ENCODE measurements at regions of chr2 and their contacts with region 1.

Region 1: DNA sequence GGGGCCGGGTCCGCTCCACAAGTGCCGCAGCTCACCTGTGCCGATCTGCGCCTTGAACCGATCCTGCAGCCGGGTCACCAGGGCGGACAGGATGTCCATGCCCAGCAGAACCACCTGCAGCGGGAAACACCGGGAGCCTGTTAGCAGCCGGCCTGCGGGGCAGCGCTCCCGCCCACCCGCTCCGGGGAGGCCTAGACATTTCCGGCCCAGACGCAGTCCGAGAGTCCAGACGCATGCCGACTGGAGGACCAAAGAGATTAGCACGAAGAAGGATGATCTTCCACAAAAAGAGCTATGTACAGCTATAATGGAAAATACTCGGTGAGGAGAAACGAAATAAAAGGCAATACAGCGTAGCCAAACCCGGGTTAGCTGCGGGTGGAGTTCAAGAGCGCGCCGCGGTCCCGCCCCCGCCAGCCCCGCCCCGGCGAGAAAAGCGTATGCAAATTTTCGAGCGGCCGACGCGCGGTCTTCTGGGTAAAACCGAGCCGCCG is 421 bp upstream of the RNU4ATAC start:
- DNase-seq: no peak
- ATAC-seq: peak; percentile 72
- H3K4me3 ChIP-seq: peak overlapping the region; percentile 75 to 94 (median 85)
- H3K4me3 Mint-ChIP-seq: peak overlapping the region; percentile 92
- H3K27ac ChIP-seq: peak overlapping the region; percentile 100
- H3K27ac Mint-ChIP-seq: peak overlapping the region; percentile 97
- H3K4me1 ChIP-seq: peaks cover 8 to 13% of the 10 kb centered on the region in 2 donors
- H3K4me1 Mint-ChIP-seq: peaks cover 42% of the 10 kb centered on the region
- H3K27me3 ChIP-seq: no peaks in the 10 kb centered on the region
- H3K27me3 Mint-ChIP-seq: no peaks in the 10 kb centered on the region
- CTCF ChIP-seq: no peak

Region 2: GRCh38 chr2:121400201-121400600 is 130.1 kb before region 1 on chr2:
- CTCF ChIA-PET with region 1: interaction called, 7 read pairs
- POLR2A ChIA-PET with region 1: no interaction called
- intact Hi-C with region 1: loop called (anchors 1 kb)
- DNase-seq: no peak
- ATAC-seq: no peak
- H3K4me3 ChIP-seq: no peak overlapping the region
- H3K4me3 Mint-ChIP-seq: no peak overlapping the region
- H3K27ac ChIP-seq: no peak overlapping the region
- H3K27ac Mint-ChIP-seq: no peak overlapping the region
- H3K4me1 ChIP-seq: no peaks in the 10 kb centered on the region
- H3K4me1 Mint-ChIP-seq: no peaks in the 10 kb centered on the region
- H3K27me3 ChIP-seq: no peaks in the 10 kb centered on the region
- H3K27me3 Mint-ChIP-seq: no peaks in the 10 kb centered on the region
- CTCF ChIP-seq: no peak

Region 3: GRCh38 chr2:121505005-121505404 is 25.3 kb before region 1 on chr2:
- CTCF ChIA-PET with region 1: no interaction called
- POLR2A ChIA-PET with region 1: no interaction called
- intact Hi-C with region 1: no loop called
- DNase-seq: no peak
- ATAC-seq: no peak
- H3K4me3 ChIP-seq: no peak overlapping the region
- H3K4me3 Mint-ChIP-seq: no peak overlapping the region
- H3K27ac ChIP-seq: no peak overlapping the region
- H3K27ac Mint-ChIP-seq: no peak overlapping the region
- H3K4me1 ChIP-seq: no peaks in the 10 kb centered on the region
- H3K4me1 Mint-ChIP-seq: no peaks in the 10 kb centered on the region
- H3K27me3 ChIP-seq: no peaks in the 10 kb centered on the region
- H3K27me3 Mint-ChIP-seq: no peaks in the 10 kb centered on the region
- CTCF ChIP-seq: no peak

Region 4: GRCh38 chr2:121611730-121612705 is 81.8 kb after region 1 on chr2:
- CTCF ChIA-PET with region 1: no interaction called
- POLR2A ChIA-PET with region 1: no interaction called
- intact Hi-C with region 1: loop called (anchors 2 kb)
- DNase-seq: peak; percentile 80
- ATAC-seq: peak; percentile 41
- H3K4me3 ChIP-seq: peak overlapping the region in 1 of 5 experiments; percentile 37
- H3K4me3 Mint-ChIP-seq: no peak overlapping the region
- H3K27ac ChIP-seq: peak overlapping the region; percentile 51 to 72
- H3K27ac Mint-ChIP-seq: no peak overlapping the region
- H3K4me1 ChIP-seq: peaks cover 7 to 8% of the 10 kb centered on the region in 2 donors
- H3K4me1 Mint-ChIP-seq: peaks cover 17% of the 10 kb centered on the region
- H3K27me3 ChIP-seq: no peaks in the 10 kb centered on the region
- H3K27me3 Mint-ChIP-seq: no peaks in the 10 kb centered on the region
- CTCF ChIP-seq: no peak

Region 5: DNA sequence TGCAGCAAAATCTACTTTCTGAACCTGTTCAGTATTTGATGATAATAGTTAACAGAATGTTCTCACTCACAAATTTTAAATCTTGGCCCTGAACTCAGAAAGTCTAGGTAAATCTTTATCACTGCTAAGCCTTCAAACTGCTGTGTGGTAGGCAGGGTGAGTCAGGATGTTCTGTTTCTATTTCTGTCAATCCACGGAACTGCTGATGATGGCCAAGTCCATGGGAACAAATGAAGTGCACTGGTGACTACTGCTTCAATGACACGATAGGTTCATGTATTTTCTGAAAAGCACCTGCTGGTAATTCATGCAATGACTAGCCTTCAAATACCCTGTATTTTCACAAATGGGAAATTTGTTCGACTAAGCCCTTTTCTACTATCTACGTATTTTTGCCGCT is 192.2 kb after region 1 on chr2:
- CTCF ChIA-PET with region 1: interaction called, 46 read pairs
- POLR2A ChIA-PET with region 1: interaction called, 5 read pairs
- intact Hi-C with region 1: loop called (anchors 1 kb)
- DNase-seq: no peak
- ATAC-seq: no peak
- H3K4me3 ChIP-seq: no peak overlapping the region
- H3K4me3 Mint-ChIP-seq: no peak overlapping the region
- H3K27ac ChIP-seq: no peak overlapping the region
- H3K27ac Mint-ChIP-seq: no peak overlapping the region
- H3K4me1 ChIP-seq: peaks cover 0 to 6% of the 10 kb centered on the region in 2 donors
- H3K4me1 Mint-ChIP-seq: peaks cover 3% of the 10 kb centered on the region
- H3K27me3 ChIP-seq: no peaks in the 10 kb centered on the region
- H3K27me3 Mint-ChIP-seq: no peaks in the 10 kb centered on the region
- CTCF ChIP-seq: no peak

Region 6: GRCh38 chr2:121755236-121756111 is 225.2 kb after region 1 on chr2 and contains the start of gene TSN:
- CTCF ChIA-PET with region 1: interaction called, 4 read pairs
- POLR2A ChIA-PET with region 1: interaction called, 6 read pairs
- intact Hi-C with region 1: loop called (anchors 1 kb)
- DNase-seq: peak; percentile 99
- ATAC-seq: peak; percentile 99
- H3K4me3 ChIP-seq: peak within 1 kb of the TSS; percentile 70 to 99 (median 95)
- H3K4me3 Mint-ChIP-seq: peak within 1 kb of the TSS; percentile 90
- H3K27ac ChIP-seq: peak within 1 kb of the TSS; percentile 49 to 84
- H3K27ac Mint-ChIP-seq: peak within 1 kb of the TSS; percentile 96
- H3K4me1 ChIP-seq: peaks cover 14 to 19% of the 10 kb centered on the region in 2 donors
- H3K4me1 Mint-ChIP-seq: peaks cover 27% of the 10 kb centered on the region
- H3K27me3 ChIP-seq: no peaks in the 10 kb centered on the region
- H3K27me3 Mint-ChIP-seq: no peaks in the 10 kb centered on the region
- CTCF ChIP-seq: no peak
- total RNA-seq, gene TSN: 43.4 and 46.0 TPM in 2 replicates

Region 7: DNA sequence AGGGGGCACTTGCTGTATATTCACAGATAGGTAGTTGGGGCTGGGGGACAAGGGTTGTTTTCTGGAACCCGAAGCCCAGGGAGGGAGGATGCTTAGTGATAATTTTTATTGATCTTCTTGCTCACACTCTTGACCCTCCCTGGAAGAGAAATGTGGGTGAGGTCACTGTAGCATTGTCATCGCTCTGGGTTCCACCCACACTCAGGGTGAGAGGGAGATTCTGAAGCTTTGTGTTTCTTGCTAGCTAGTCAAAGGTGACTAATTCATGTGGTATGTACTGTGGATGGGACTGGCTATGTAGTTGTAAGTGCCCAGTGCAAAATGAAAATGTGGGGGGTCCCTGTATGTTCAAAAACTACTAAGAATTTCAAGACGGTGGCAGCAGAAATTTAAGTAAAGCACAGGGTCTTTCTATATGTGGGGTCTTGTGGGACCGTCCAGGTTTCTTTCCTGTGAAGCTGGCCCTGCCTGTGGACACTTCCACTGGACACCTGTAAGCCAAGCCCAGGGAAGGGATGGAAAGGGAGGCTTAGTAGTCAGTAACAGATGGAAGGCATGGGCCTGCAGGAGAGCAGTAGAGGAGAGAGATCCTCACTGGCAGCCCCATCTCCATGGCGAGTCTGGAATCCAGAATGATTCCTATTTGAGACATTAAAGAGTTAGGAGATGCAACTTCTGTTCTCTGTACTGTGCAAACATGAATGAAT is 260.1 kb after region 1 on chr2:
- CTCF ChIA-PET with region 1: no interaction called
- POLR2A ChIA-PET with region 1: no interaction called
- intact Hi-C with region 1: no loop called
- DNase-seq: no peak
- ATAC-seq: no peak
- H3K4me3 ChIP-seq: no peak overlapping the region
- H3K4me3 Mint-ChIP-seq: no peak overlapping the region
- H3K27ac ChIP-seq: no peak overlapping the region
- H3K27ac Mint-ChIP-seq: no peak overlapping the region
- H3K4me1 ChIP-seq: no peaks in the 10 kb centered on the region
- H3K4me1 Mint-ChIP-seq: no peaks in the 10 kb centered on the region
- H3K27me3 ChIP-seq: peaks cover 0 to 9% (median 3%) of the 10 kb centered on the region in 4 experiments
- H3K27me3 Mint-ChIP-seq: peaks cover 34% of the 10 kb centered on the region
- CTCF ChIP-seq: no peak